IMR-90 (cell line): ENCODE measurements at regions of chr6 and their contacts with region 1.

Region 1: GRCh38 chr6:157656437-157656997 is 166.5 kb upstream of the SNX9 start:
- DNase-seq: peak; percentile 38
- ATAC-seq: peak; percentile 54; the same call in 1 of the 2 replicates
- H3K4me3 ChIP-seq: no peak overlapping the region
- H3K27ac ChIP-seq: no peak overlapping the region
- H3K4me1 ChIP-seq: peaks cover 2% of the 10 kb centered on the region
- H3K27me3 ChIP-seq: no peaks in the 10 kb centered on the region
- CTCF ChIP-seq: no peak
- POLR2A ChIP-seq: no peak
- RAD21 ChIP-seq: no peak

Region 2: GRCh38 chr6:157148391-157149323 is 507.9 kb before region 1 on chr6:
- CTCF ChIA-PET with region 1: no interaction called
- POLR2A ChIA-PET with region 1: no interaction called
- dilution Hi-C with region 1: no loop called
- in situ Hi-C with region 1: no loop called
- intact Hi-C with region 1: no loop called
- DNase-seq: peak; percentile 98
- ATAC-seq: peak; percentile 65
- H3K4me3 ChIP-seq: no peak overlapping the region
- H3K27ac ChIP-seq: peak overlapping the region; percentile 93
- H3K4me1 ChIP-seq: peaks cover 42% of the 10 kb centered on the region
- H3K27me3 ChIP-seq: no peaks in the 10 kb centered on the region
- CTCF ChIP-seq: no peak
- POLR2A ChIP-seq: peak; percentile 85
- RAD21 ChIP-seq: peak; percentile 12

Region 3: DNA sequence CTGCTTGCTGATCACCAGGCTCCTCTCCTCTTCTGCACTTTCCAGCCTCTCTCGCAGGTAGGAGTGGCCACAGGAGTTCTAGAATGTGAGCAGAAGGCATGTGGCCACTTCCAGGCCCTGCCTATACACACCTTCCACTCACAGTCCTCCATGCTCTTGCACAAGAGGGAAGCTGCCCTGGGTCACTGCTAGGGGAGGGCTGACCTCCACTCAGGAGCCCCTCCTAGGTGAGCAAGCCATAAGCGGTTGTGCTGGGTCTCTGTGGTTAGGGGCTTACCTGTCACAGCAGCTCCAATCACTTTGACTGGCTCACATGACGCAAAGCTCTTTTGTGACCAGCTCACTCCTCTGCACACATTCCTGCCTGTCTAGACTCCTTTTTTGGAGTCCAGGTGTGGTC is 401.4 kb before region 1 on chr6:
- CTCF ChIA-PET with region 1: no interaction called
- POLR2A ChIA-PET with region 1: interaction called, 17 read pairs
- dilution Hi-C with region 1: no loop called
- in situ Hi-C with region 1: no loop called
- intact Hi-C with region 1: no loop called
- DNase-seq: no peak
- ATAC-seq: no peak
- H3K4me3 ChIP-seq: no peak overlapping the region
- H3K27ac ChIP-seq: no peak overlapping the region
- H3K4me1 ChIP-seq: no peaks in the 10 kb centered on the region
- H3K27me3 ChIP-seq: peaks cover 46% of the 10 kb centered on the region
- CTCF ChIP-seq: no peak
- POLR2A ChIP-seq: no peak
- RAD21 ChIP-seq: no peak